CD8-positive, alpha-beta T cell (primary cell): ENCODE measurements at regions of chr16 and their contacts with region 1.

Region 1: DNA sequence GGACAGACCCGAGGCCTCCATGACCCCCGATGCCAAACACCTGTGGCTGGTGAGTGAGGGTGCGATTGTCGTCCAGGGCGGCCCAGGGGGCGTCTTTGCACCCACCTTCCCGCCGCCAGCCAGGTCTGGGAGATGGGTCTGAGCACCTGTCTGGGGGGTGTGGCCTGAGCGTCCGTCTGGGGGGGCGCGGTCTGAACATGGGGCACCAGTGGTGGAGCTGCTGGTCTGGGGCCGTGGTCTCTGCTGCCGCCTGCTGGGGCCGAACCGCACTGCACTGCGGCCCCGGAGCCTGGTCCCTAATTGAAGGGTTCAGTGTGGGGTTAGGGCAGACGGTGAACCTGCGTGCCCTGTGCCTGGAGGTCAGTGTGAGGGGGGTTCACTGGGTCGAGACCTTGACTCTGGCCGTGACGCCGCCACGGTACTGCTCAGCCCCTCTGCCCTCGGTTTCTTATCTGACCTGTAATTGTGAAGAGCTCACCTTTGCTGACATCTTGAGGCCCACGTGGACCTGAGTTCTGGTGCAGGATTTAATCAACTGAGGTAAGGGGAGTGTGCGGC is 12.6 kb upstream of the TCF25 start:
- DNase-seq: peak; percentile 61 to 87 (median 76)
- ATAC-seq: peak; percentile 92
- H3K4me3 ChIP-seq: no peak overlapping the region
- H3K4me3 Mint-ChIP-seq: no peak overlapping the region
- H3K27ac ChIP-seq: no peak overlapping the region
- H3K27ac Mint-ChIP-seq: no peak overlapping the region
- H3K4me1 ChIP-seq: peaks cover 30% of the 10 kb centered on the region
- H3K4me1 Mint-ChIP-seq: peaks cover 29% of the 10 kb centered on the region
- H3K27me3 ChIP-seq: peaks cover 0 to 2% of the 10 kb centered on the region in 2 experiments
- H3K27me3 Mint-ChIP-seq: no peaks in the 10 kb centered on the region
- CTCF ChIP-seq: peak; percentile 98

Region 2: GRCh38 chr16:89132291-89133005 is 728.4 kb before region 1 on chr16:
- CTCF ChIA-PET with region 1: no interaction called
- POLR2A ChIA-PET with region 1: no interaction called
- intact Hi-C with region 1: no loop called
- DNase-seq: peak in 1 of 9 experiments; percentile 5
- ATAC-seq: no peak
- H3K4me3 ChIP-seq: no peak overlapping the region
- H3K4me3 Mint-ChIP-seq: no peak overlapping the region
- H3K27ac ChIP-seq: no peak overlapping the region
- H3K27ac Mint-ChIP-seq: no peak overlapping the region
- H3K4me1 ChIP-seq: no peaks in the 10 kb centered on the region
- H3K4me1 Mint-ChIP-seq: peaks cover 8% of the 10 kb centered on the region
- H3K27me3 ChIP-seq: no peaks in the 10 kb centered on the region
- H3K27me3 Mint-ChIP-seq: no peaks in the 10 kb centered on the region
- CTCF ChIP-seq: no peak

Region 3: DNA sequence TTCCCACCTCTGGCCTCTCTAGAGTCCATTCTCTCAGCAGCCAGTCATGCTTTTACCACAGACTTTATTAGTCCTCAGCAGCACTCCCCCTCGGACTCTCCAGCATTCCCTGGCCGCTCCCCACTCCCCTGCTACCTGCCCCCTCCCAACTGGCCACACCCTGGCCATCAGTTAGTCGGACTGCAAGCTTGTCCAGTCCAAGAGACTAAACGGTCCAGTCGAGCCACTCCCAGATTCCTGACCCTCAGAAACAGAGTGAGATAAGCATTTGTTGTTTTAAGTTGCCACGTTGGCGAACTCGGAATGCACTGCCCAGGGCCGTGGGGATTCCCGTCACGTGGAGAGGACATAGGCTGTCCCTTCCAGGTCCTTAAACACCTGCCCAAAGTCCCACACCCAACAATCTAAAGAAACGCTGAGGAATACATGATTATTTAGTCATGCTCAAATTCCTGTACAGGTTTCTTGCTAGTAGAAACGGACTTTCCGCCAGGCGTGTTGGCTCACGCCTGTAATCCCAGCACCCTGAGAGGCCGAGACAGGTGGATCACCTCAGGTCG is 358.4 kb before region 1 on chr16:
- CTCF ChIA-PET with region 1: no interaction called
- POLR2A ChIA-PET with region 1: no interaction called
- intact Hi-C with region 1: no loop called
- DNase-seq: no peak
- ATAC-seq: no peak
- H3K4me3 ChIP-seq: no peak overlapping the region
- H3K4me3 Mint-ChIP-seq: no peak overlapping the region
- H3K27ac ChIP-seq: no peak overlapping the region
- H3K27ac Mint-ChIP-seq: no peak overlapping the region
- H3K4me1 ChIP-seq: peaks cover 23% of the 10 kb centered on the region
- H3K4me1 Mint-ChIP-seq: peaks cover 24% of the 10 kb centered on the region
- H3K27me3 ChIP-seq: no peaks in the 10 kb centered on the region
- H3K27me3 Mint-ChIP-seq: no peaks in the 10 kb centered on the region
- CTCF ChIP-seq: no peak

Region 4: GRCh38 chr16:89706507-89707263 is 154.1 kb before region 1 on chr16:
- CTCF ChIA-PET with region 1: interaction called, 272 read pairs
- POLR2A ChIA-PET with region 1: interaction called, 13 read pairs
- intact Hi-C with region 1: loop called (anchors 1 kb)
- DNase-seq: peak in 1 of 9 experiments; percentile 20
- ATAC-seq: no peak
- H3K4me3 ChIP-seq: no peak overlapping the region
- H3K4me3 Mint-ChIP-seq: no peak overlapping the region
- H3K27ac ChIP-seq: no peak overlapping the region
- H3K27ac Mint-ChIP-seq: no peak overlapping the region
- H3K4me1 ChIP-seq: peaks cover 16% of the 10 kb centered on the region
- H3K4me1 Mint-ChIP-seq: peaks cover 12% of the 10 kb centered on the region
- H3K27me3 ChIP-seq: no peaks in the 10 kb centered on the region
- H3K27me3 Mint-ChIP-seq: no peaks in the 10 kb centered on the region
- CTCF ChIP-seq: no peak

Region 5: DNA sequence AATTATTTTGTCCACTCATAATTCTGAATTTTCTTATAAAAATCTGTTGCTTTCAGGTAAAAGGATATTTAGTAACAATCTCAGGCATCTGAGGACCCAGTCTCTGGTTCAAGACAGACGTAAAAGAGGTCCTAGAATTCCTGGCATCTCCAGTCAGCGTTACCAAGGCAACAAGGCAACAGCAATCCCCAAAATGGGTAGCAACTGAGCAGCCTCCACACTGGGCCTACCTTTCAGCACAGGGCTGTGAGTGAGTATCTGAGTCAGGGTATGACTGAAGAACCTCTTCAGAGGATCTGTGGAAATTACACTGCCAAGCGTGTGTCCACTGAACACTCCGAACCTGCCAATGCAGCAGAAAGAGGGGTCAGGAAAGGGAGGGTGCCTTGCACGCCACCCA is 65.2 kb before region 1 on chr16:
- CTCF ChIA-PET with region 1: interaction called, 36 read pairs
- POLR2A ChIA-PET with region 1: no interaction called
- intact Hi-C with region 1: loop called (anchors 1 to 2 kb)
- DNase-seq: no peak
- ATAC-seq: no peak
- H3K4me3 ChIP-seq: no peak overlapping the region
- H3K4me3 Mint-ChIP-seq: no peak overlapping the region
- H3K27ac ChIP-seq: no peak overlapping the region
- H3K27ac Mint-ChIP-seq: no peak overlapping the region
- H3K4me1 ChIP-seq: no peaks in the 10 kb centered on the region
- H3K4me1 Mint-ChIP-seq: peaks cover 13% of the 10 kb centered on the region
- H3K27me3 ChIP-seq: no peaks in the 10 kb centered on the region
- H3K27me3 Mint-ChIP-seq: no peaks in the 10 kb centered on the region
- CTCF ChIP-seq: no peak

Region 6: GRCh38 chr16:89842471-89843408 is 18.1 kb before region 1 on chr16:
- CTCF ChIA-PET with region 1: interaction called, 10 read pairs
- POLR2A ChIA-PET with region 1: interaction called, 4 read pairs
- intact Hi-C with region 1: no loop called
- DNase-seq: peak in 1 of 9 experiments; percentile 12
- ATAC-seq: no peak
- H3K4me3 ChIP-seq: no peak overlapping the region
- H3K4me3 Mint-ChIP-seq: no peak overlapping the region
- H3K27ac ChIP-seq: no peak overlapping the region
- H3K27ac Mint-ChIP-seq: no peak overlapping the region
- H3K4me1 ChIP-seq: peaks cover 34% of the 10 kb centered on the region
- H3K4me1 Mint-ChIP-seq: peaks cover 27% of the 10 kb centered on the region
- H3K27me3 ChIP-seq: no peaks in the 10 kb centered on the region
- H3K27me3 Mint-ChIP-seq: no peaks in the 10 kb centered on the region
- CTCF ChIP-seq: no peak

Region 7: GRCh38 chr16:89893642-89894509 is 33.0 kb after region 1 on chr16:
- CTCF ChIA-PET with region 1: interaction called, 14 read pairs
- POLR2A ChIA-PET with region 1: no interaction called
- intact Hi-C with region 1: no loop called
- DNase-seq: no peak
- ATAC-seq: no peak
- H3K4me3 ChIP-seq: no peak overlapping the region
- H3K4me3 Mint-ChIP-seq: no peak overlapping the region
- H3K27ac ChIP-seq: no peak overlapping the region
- H3K27ac Mint-ChIP-seq: no peak overlapping the region
- H3K4me1 ChIP-seq: peaks cover 5% of the 10 kb centered on the region
- H3K4me1 Mint-ChIP-seq: peaks cover 13% of the 10 kb centered on the region
- H3K27me3 ChIP-seq: no peaks in the 10 kb centered on the region
- H3K27me3 Mint-ChIP-seq: no peaks in the 10 kb centered on the region
- CTCF ChIP-seq: no peak

Region 8: GRCh38 chr16:89925596-89926079 is 64.8 kb after region 1 on chr16:
- CTCF ChIA-PET with region 1: no interaction called
- POLR2A ChIA-PET with region 1: no interaction called
- intact Hi-C with region 1: no loop called
- DNase-seq: no peak
- ATAC-seq: no peak
- H3K4me3 ChIP-seq: no peak overlapping the region
- H3K4me3 Mint-ChIP-seq: peak overlapping the region; percentile 29
- H3K27ac ChIP-seq: no peak overlapping the region
- H3K27ac Mint-ChIP-seq: no peak overlapping the region
- H3K4me1 ChIP-seq: peaks cover 29% of the 10 kb centered on the region
- H3K4me1 Mint-ChIP-seq: peaks cover 20% of the 10 kb centered on the region
- H3K27me3 ChIP-seq: peaks cover 30 to 54% of the 10 kb centered on the region in 2 experiments
- H3K27me3 Mint-ChIP-seq: peaks cover 31% of the 10 kb centered on the region
- CTCF ChIP-seq: no peak

Region 9: GRCh38 chr16:90031931-90032687 is 171.3 kb after region 1 on chr16:
- CTCF ChIA-PET with region 1: no interaction called
- POLR2A ChIA-PET with region 1: no interaction called
- intact Hi-C with region 1: no loop called
- DNase-seq: no peak
- ATAC-seq: no peak
- H3K4me3 ChIP-seq: no peak overlapping the region
- H3K4me3 Mint-ChIP-seq: no peak overlapping the region
- H3K27ac ChIP-seq: no peak overlapping the region
- H3K27ac Mint-ChIP-seq: no peak overlapping the region
- H3K4me1 ChIP-seq: no peaks in the 10 kb centered on the region
- H3K4me1 Mint-ChIP-seq: peaks cover 3% of the 10 kb centered on the region
- H3K27me3 ChIP-seq: no peaks in the 10 kb centered on the region
- H3K27me3 Mint-ChIP-seq: no peaks in the 10 kb centered on the region
- CTCF ChIP-seq: no peak